HCT116 (cell line): ENCODE measurements at regions of chr14 and their contacts with region 1.

Region 1: GRCh38 chr14:90697577-90698206 is 118.5 kb downstream of the TTC7B start:
- DNase-seq: peak; percentile 58
- ATAC-seq: peak; percentile 99
- H3K4me3 ChIP-seq: no peak overlapping the region
- H3K27ac ChIP-seq: no peak overlapping the region
- H3K4me1 ChIP-seq: peaks cover 2 to 8% of the 10 kb centered on the region in 2 experiments; a peak in 2 of 4 replicates
- H3K27me3 ChIP-seq: no peaks in the 10 kb centered on the region
- CTCF ChIP-seq: peak; percentile 91 to 95 (median 94)
- POLR2A ChIP-seq: no peak
- RAD21 ChIP-seq: peak; percentile 93

Region 2: DNA sequence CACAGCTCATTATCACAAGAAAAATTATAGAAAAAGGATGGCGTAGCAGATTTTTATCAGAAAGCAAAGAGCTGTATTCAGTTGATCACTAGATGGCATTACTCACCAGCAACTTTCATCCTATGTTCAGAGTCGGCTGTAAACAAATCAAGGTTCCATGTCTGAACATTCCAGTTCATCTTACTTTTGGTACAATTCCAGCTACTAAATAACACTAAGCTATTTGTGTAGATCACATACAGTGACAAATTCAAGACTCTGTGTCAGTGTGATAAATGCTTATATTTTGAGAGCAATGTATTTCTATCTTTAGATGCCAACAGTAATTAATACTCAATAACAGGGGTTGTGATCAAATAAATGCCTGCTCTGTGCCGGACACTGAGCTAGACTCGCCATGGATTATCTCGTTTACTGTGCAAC is 396.0 kb before region 1 on chr14:
- CTCF ChIA-PET with region 1: interaction called, 32 read pairs
- POLR2A ChIA-PET with region 1: no interaction called
- RAD21 ChIA-PET with region 1: no interaction called
- intact Hi-C with region 1: loop called (anchors 1 kb)
- DNase-seq: no peak
- ATAC-seq: no peak
- H3K4me3 ChIP-seq: no peak overlapping the region
- H3K27ac ChIP-seq: no peak overlapping the region
- H3K4me1 ChIP-seq: peaks cover 0 to 7% of the 10 kb centered on the region in 2 experiments; a peak in 1 of 4 replicates
- H3K27me3 ChIP-seq: no peaks in the 10 kb centered on the region
- CTCF ChIP-seq: peak; percentile 22 to 45 (median 43); a peak in 4 of 6 replicates
- POLR2A ChIP-seq: no peak
- RAD21 ChIP-seq: peak; percentile 77

Region 3: DNA sequence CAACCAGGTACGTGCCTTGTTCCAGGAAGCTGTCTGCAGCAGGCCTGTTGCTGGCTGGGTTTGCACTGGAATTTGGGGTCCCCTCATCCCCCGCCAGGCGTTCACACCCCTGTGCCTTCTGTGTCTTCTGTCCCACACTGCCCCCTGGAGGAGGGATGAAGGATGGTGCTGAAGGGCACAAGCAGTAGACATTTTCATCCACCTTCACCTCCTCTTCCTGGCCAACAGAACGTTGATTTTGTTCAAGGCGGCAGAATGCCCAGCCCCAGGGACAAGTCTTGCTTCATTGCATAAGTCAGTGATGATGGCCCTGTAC is 178.8 kb before region 1 on chr14:
- CTCF ChIA-PET with region 1: interaction called, 5 read pairs
- POLR2A ChIA-PET with region 1: no interaction called
- RAD21 ChIA-PET with region 1: no interaction called
- intact Hi-C with region 1: loop called (anchors 5 kb)
- DNase-seq: peak; percentile 37
- ATAC-seq: peak; percentile 77
- H3K4me3 ChIP-seq: no peak overlapping the region
- H3K27ac ChIP-seq: no peak overlapping the region
- H3K4me1 ChIP-seq: peaks cover 39 to 50% of the 10 kb centered on the region in 2 experiments
- H3K27me3 ChIP-seq: no peaks in the 10 kb centered on the region
- CTCF ChIP-seq: peak; percentile 80 to 88 (median 86)
- POLR2A ChIP-seq: no peak
- RAD21 ChIP-seq: peak; percentile 86